ENCODE measurements at regions of chrX and their contacts with region 1.

Region 1: GRCh38 chrX:120316589-120317283 is 5.5 kb upstream of the TMEM255A start:
- DNase-seq: no peak
- ATAC-seq: no peak

Region 2: DNA sequence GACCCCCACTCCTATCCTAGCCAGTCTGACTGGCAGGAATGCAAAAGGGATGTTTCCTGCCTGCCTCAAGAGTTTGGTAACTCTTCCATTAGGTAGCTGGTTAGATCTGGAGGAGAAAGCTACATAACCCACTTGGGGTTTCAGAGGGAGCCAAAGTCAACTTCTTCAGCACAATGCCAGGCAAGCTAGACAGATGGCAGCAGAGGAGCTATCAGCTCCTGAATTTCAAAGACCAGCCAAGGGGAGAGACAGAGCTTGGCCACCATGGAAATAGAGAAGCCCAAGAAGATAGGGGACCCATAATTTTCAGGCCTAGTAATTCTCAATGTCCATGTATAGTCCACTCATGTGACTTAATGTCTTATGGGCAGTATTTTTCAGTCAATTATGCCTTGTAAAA is 1024.3 kb before region 1 on chrX:
- intact Hi-C with region 1: loop called (anchors 5 kb)
- DNase-seq: no peak
- ATAC-seq: no peak

Region 3: GRCh38 chrX:119970574-119970973 is 346.2 kb before region 1 on chrX:
- intact Hi-C with region 1: no loop called
- DNase-seq: no peak
- ATAC-seq: no peak

Region 4: GRCh38 chrX:121356139-121356849 is 1039.6 kb after region 1 on chrX:
- intact Hi-C with region 1: no loop called
- DNase-seq: no peak
- ATAC-seq: no peak